Activated CD4-positive, alpha-beta memory T cell treated with anti-CD3 and anti-CD28 coated beads for 36 hours (primary cell): ENCODE measurements at regions of chr3 and their contacts with region 1.

Region 1: DNA sequence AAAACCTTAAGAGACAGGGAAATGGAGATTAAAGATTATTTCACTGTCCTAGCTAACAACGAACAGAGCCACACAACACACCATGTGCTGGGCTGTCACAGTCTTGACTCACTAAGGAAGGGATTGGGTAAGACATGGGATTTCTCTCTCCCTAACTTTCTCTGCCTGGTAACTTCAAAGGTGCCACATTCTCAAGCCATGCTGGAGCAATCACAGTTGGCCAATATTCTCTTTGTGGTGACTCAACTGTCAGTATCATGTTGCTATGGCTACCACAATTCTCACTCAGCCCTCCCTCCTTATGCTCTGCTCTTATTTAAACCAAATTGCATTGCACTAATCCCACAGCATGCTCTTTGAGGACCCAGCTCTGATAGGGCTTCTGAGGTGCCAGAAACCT is 74.0 kb downstream of the OXNAD1 start:
- DNase-seq: no peak
- H3K4me3 Mint-ChIP-seq: no peak overlapping the region
- H3K27ac Mint-ChIP-seq: no peak overlapping the region
- H3K4me1 Mint-ChIP-seq: peaks cover 67% of the 10 kb centered on the region
- H3K27me3 Mint-ChIP-seq: no peaks in the 10 kb centered on the region

Region 2: GRCh38 chr3:16319307-16319706 is 19.7 kb before region 1 on chr3:
- CTCF ChIA-PET with region 1: interaction called, 13 read pairs
- POLR2A ChIA-PET with region 1: interaction called, 3 read pairs
- intact Hi-C with region 1: loop called (anchors 1 kb)
- DNase-seq: peak; percentile 91
- H3K4me3 Mint-ChIP-seq: no peak overlapping the region
- H3K27ac Mint-ChIP-seq: peak overlapping the region; percentile 80
- H3K4me1 Mint-ChIP-seq: peaks cover 64% of the 10 kb centered on the region
- H3K27me3 Mint-ChIP-seq: no peaks in the 10 kb centered on the region

Region 3: DNA sequence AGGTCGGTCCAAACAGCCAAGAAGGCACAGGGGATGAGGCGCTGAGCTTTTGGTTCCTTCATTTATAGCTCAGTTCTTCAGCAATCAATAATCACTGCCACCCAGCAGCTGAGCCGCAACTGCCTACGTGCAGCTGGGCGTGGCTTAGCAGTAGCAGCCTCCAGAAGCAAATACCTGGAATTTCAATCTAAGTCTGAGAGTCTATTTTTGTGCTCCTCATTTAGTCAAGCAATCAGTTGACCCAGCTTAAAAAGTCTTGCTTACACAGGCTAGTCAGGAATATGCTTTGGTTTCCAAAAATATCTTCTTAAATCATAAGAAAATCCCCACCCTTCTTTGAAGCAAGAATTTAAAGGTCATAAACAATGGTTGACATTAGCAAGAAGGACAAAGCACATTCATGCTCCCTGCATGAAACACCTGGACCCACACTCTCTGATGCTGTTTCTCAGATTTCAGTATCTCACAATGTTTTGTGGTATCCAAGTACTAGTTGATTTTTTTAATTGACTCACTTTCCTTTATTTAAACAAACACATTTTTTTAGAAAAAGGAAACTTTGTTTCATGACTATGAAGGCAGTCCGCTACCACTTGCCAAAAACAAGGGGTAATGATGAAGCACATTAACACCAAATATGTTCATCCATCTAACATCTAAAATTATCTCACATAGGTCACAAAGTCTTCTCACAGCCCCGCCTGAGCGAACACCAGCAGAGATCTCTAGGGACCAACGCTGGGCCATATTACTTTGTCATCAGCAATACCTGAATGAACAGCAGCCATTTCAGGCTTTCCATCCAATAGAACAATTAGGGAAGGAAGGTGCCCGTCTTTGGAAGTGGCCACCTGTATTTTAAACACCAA is 32.1 kb after region 1 on chr3:
- CTCF ChIA-PET with region 1: no interaction called
- POLR2A ChIA-PET with region 1: no interaction called
- intact Hi-C with region 1: loop called (anchors 5 kb)
- DNase-seq: no peak
- H3K4me3 Mint-ChIP-seq: no peak overlapping the region
- H3K27ac Mint-ChIP-seq: peak overlapping the region; percentile 6
- H3K4me1 Mint-ChIP-seq: peaks cover 61% of the 10 kb centered on the region
- H3K27me3 Mint-ChIP-seq: no peaks in the 10 kb centered on the region

Region 4: DNA sequence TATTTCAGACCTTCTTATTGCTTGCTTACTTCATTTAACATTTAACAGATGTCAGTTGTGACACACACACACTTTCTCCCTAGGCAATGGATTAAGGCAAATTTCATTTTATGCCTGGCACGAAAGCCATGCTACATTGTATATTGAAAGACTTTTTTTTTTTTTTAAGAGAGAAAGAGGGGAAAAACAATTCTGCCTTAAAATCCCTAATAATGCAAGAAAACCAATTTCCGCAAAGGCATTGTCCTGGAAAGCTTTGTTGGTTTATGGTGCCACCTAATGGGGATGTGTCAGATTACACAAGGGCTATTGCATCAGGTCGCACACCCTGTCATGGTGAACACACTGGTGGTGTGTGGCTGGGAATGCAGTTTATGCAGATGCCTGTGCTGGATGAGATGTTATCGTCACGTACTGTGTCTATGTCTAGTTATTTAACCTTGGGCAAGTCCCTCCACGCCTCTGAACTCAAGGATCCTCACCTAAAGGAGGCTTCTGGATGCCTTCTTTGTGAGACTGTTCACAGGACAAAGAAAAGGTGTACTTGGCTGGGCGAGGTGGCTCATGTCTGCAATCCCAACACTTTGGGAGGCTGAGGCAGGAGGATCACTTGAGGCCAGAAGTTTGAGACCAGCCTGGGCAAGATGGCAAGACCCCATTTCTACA is 211.8 kb after region 1 on chr3:
- CTCF ChIA-PET with region 1: no interaction called
- POLR2A ChIA-PET with region 1: no interaction called
- intact Hi-C with region 1: loop called (anchors 5 kb)
- DNase-seq: peak; percentile 82
- H3K4me3 Mint-ChIP-seq: peak overlapping the region; percentile 3
- H3K27ac Mint-ChIP-seq: peak overlapping the region; percentile 59
- H3K4me1 Mint-ChIP-seq: peaks cover 3% of the 10 kb centered on the region
- H3K27me3 Mint-ChIP-seq: peaks cover 5% of the 10 kb centered on the region